ENCODE measurements at regions of chr6 and their contacts with region 1.

Region 1: DNA sequence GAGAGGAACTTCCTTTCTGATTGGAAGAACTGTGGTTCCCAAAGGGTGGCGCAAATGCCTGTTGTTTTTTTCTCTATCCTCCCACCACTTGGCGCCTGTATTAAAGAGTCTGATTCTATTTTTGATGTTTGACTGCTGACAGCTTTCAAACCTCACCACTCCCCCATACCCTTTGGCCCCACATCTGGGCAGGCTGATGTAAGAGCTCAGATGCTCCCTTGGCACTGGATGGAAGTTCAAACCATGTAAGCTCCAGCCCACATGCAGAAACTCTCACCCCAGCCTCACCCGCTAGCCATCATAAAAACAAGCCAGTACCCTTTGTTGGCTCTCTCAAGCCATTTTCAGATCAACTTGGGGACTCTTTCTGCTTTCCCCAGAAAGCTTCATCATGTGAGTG is 20.0 kb upstream of the TMEM14A start:
- DNase-seq: no peak
- H3K4me3 ChIP-seq: no peak overlapping the region
- H3K27ac ChIP-seq: no peak overlapping the region
- H3K4me1 ChIP-seq: no peaks in the 10 kb centered on the region
- H3K27me3 ChIP-seq: peaks cover 0 to 3% of the 10 kb centered on the region in 2 donors
- CTCF ChIP-seq: no peak

Region 2: DNA sequence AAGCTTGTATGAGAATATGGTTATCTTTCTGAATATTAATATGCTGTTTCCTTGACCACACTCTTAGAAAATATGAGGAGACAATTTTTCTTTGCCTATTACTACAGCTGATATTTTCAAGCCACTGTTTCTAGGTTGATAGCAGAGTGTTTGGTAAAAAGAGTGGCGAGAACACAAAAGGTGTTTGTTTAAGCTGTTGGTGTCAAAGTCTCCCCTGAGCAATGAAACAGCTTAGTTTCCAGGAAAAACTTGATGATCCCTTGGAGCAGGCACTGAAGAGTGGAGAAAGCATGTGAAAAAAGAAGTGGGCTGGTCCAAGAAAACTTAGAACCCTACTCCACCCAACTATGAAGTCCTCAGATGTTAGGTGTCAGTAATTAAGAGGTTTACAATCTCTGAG is 1649.5 kb before region 1 on chr6:
- intact Hi-C with region 1: no loop called
- DNase-seq: no peak
- H3K4me3 ChIP-seq: no peak overlapping the region
- H3K27ac ChIP-seq: no peak overlapping the region
- H3K4me1 ChIP-seq: no peaks in the 10 kb centered on the region
- H3K27me3 ChIP-seq: no peaks in the 10 kb centered on the region
- CTCF ChIP-seq: no peak

Region 3: GRCh38 chr6:52724406-52725121 is 73.6 kb after region 1 on chr6:
- intact Hi-C with region 1: no loop called
- DNase-seq: peak; percentile 87 to 93
- H3K4me3 ChIP-seq: no peak overlapping the region
- H3K27ac ChIP-seq: peak overlapping the region; percentile 52 to 77
- H3K4me1 ChIP-seq: peaks cover 0 to 40% (median 15%) of the 10 kb centered on the region in 4 donors
- H3K27me3 ChIP-seq: no peaks in the 10 kb centered on the region
- CTCF ChIP-seq: peak; percentile 40 to 49

Region 4: GRCh38 chr6:52779237-52779636 is 128.3 kb after region 1 on chr6:
- intact Hi-C with region 1: no loop called
- DNase-seq: no peak
- H3K4me3 ChIP-seq: no peak overlapping the region
- H3K27ac ChIP-seq: no peak overlapping the region
- H3K4me1 ChIP-seq: no peaks in the 10 kb centered on the region
- H3K27me3 ChIP-seq: no peaks in the 10 kb centered on the region
- CTCF ChIP-seq: no peak

Region 5: GRCh38 chr6:54419885-54420284 is 1768.9 kb after region 1 on chr6:
- intact Hi-C with region 1: loop called (anchors 5 kb)
- DNase-seq: no peak
- H3K4me3 ChIP-seq: no peak overlapping the region
- H3K27ac ChIP-seq: no peak overlapping the region
- H3K4me1 ChIP-seq: peaks cover 0 to 8% (median 0%) of the 10 kb centered on the region in 4 donors
- H3K27me3 ChIP-seq: no peaks in the 10 kb centered on the region
- CTCF ChIP-seq: no peak